Dendritic cell treated with granulocyte-macrophage colony-stimulating factor and Interleukin-4, amounts not matched to agents 40 ng/mL and 50 ng/mL, for 4 days (primary cell): ENCODE measurements at regions of chr22 and their contacts with region 1.

Region 1: DNA sequence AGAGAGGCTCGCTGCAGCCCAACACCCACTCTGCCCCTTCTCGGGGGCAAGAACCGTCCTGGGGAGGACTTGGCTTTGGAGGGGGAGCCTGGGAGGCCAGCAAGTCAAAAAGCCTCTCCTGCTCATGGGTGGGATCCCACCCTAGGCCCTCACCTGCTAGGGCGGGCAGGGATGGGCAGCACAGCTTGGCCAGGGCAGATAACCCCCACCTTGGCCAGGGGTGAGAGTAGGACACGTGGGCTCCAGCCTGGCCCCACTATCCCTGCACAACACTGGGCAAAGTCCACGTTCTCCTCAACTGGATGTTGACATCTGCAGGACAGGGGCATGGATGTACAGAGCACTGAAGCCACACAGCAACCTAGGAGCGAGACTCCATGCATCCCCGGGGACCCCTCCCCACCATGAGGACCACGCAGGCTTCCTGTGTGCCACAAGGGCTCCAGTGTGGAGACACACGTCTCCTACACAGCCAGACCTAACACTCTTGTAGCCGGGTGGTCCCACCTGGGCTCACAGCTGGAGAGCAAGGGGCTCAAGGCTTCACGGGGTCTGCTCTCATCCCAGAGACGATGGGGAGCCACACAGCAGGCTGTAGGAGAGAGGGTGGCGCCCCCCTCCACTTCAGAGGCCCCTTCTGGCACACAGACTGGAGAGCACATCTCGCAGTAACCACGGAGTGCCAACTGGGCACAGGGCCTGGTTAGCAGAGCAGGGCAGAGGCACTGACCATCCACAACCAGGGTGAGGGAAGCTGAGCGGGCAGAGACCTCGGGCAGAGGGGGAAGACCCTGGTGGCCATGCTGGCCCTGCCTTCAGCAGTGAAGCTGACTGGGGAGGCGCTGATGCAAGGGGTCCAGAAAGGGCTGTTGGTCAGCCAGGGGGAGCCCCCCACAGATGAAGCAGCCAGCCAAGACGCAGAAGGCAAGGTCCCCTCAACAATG is 171.1 kb downstream of the CRYBB2 start:
- H3K4me3 Mint-ChIP-seq: peak overlapping the region; percentile 26
- H3K27ac Mint-ChIP-seq: peak overlapping the region; percentile 56
- H3K4me1 Mint-ChIP-seq: peaks cover 84% of the 10 kb centered on the region
- H3K27me3 Mint-ChIP-seq: peaks cover 29% of the 10 kb centered on the region

Region 2: GRCh38 chr22:25447686-25448434 is 57.3 kb after region 1 on chr22:
- intact Hi-C with region 1: loop called (anchors 10 kb)
- H3K4me3 Mint-ChIP-seq: peak overlapping the region; percentile 91
- H3K27ac Mint-ChIP-seq: peak overlapping the region; percentile 83
- H3K4me1 Mint-ChIP-seq: peaks cover 37% of the 10 kb centered on the region
- H3K27me3 Mint-ChIP-seq: no peaks in the 10 kb centered on the region

Region 3: DNA sequence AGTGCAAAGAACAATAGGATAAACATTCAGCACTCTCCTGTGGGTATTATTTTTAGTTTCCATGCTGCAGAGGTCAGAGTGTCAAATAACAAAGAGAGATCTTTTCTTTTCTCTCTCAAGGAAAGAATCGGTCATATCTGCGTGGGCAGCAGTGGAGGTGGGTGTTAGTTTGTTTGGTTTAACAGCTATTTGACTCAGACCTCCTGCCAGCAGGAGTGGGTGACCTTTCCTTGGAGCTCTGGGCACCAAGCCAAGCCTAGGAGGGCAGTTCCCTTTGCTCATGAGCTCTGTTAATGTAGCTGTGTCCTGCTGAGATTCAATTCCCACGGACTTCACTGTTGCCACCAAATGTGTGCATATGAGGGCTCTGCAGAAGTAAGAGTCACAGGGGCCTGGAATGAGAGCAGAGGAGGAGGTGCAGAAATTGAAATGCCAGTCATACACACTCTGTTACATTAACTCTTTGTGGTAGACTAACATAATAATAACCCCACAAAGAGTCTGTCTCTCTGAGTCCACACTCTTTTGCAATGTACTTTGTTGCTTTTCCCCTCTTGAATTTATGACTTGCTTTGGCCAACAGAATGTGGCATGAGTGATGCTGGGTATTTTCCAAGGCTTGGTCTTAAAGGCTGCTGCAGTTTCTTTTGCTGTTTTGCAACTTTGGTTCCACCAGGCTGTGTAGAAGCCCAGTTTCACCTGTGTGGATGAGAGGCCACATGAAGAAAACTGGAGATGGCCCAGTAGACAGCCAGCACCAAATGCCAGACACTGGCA is 97.9 kb after region 1 on chr22:
- intact Hi-C with region 1: no loop called
- H3K4me3 Mint-ChIP-seq: no peak overlapping the region
- H3K27ac Mint-ChIP-seq: no peak overlapping the region
- H3K4me1 Mint-ChIP-seq: peaks cover 50% of the 10 kb centered on the region
- H3K27me3 Mint-ChIP-seq: peaks cover 2% of the 10 kb centered on the region